Pancreas (tissue), 10 donors: ENCODE measurements at regions of chr7 and their contacts with region 1.

Region 1: GRCh38 chr7:20310963-20311742 is 19.5 kb upstream of the ITGB8 start:
- DNase-seq: no peak
- ATAC-seq: peak in 2 of 4 donors; percentile 52 to 63
- H3K4me3 ChIP-seq: no peak overlapping the region
- H3K27ac ChIP-seq: no peak overlapping the region
- H3K4me1 ChIP-seq: no peaks in the 10 kb centered on the region
- H3K27me3 ChIP-seq: no peaks in the 10 kb centered on the region
- CTCF ChIP-seq: peak in 1 of 4 donors; percentile 22

Region 2: DNA sequence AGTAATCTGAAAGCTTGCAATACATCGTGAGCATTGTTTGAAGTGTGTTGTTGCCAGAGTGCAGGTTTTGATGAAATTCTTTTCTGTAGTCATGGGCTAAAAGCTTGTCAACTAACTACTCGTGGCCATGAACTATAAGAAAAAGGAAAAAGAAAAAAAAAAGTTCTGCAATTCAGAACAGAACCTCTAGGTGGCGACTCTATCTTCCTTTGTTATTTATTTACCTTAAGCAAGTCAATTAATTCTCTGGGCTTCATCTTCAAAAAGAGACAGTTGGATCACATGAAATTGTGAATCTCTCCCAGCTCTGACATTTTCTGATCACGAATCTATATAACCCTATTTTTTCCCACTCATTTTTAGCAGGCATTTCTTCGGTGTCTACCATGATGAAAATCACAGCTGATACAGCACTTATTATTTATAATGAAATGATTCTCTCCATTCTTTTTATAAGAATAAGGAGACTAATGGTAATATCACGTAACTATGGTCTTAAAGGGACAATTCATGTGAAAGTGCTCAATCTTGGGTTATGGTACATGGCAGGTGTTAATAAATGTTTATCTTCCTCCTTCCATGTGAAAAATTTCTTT is 556.5 kb before region 1 on chr7:
- intact Hi-C with region 1: loop called in 1 of 3 experiments (anchors 10 kb)
- DNase-seq: no peak
- ATAC-seq: peak in 2 of 4 donors; percentile 25 to 46
- H3K4me3 ChIP-seq: no peak overlapping the region
- H3K27ac ChIP-seq: no peak overlapping the region
- H3K4me1 ChIP-seq: no peaks in the 10 kb centered on the region
- H3K27me3 ChIP-seq: no peaks in the 10 kb centered on the region
- CTCF ChIP-seq: peak in 3 of 4 donors; percentile 50 to 73 (median 54)

Region 3: GRCh38 chr7:20991544-20991943 is 680.4 kb after region 1 on chr7:
- intact Hi-C with region 1: no loop called
- DNase-seq: no peak
- ATAC-seq: no peak
- H3K4me3 ChIP-seq: no peak overlapping the region
- H3K27ac ChIP-seq: no peak overlapping the region
- H3K4me1 ChIP-seq: no peaks in the 10 kb centered on the region
- H3K27me3 ChIP-seq: no peaks in the 10 kb centered on the region
- CTCF ChIP-seq: no peak